AG04450 (cell line): ENCODE measurements at regions of chr17 and their contacts with region 1.

Region 1: GRCh38 chr17:1752425-1753262 is 9.2 kb upstream of the SERPINF1 start:
- DNase-seq: no peak
- H3K4me3 ChIP-seq: no peak overlapping the region
- H3K27ac ChIP-seq: no peak overlapping the region
- H3K27me3 ChIP-seq: peaks cover 7% of the 10 kb centered on the region
- CTCF ChIP-seq: no peak

Region 2: GRCh38 chr17:1820528-1821252 is 68.0 kb after region 1 on chr17:
- CTCF ChIA-PET with region 1: no interaction called
- POLR2A ChIA-PET with region 1: interaction called, 10 read pairs
- DNase-seq: no peak
- H3K4me3 ChIP-seq: no peak overlapping the region
- H3K27ac ChIP-seq: no peak overlapping the region
- H3K27me3 ChIP-seq: no peaks in the 10 kb centered on the region
- CTCF ChIP-seq: no peak